ENCODE measurements at regions of chr6 and their contacts with region 1.

Region 1: GRCh38 chr6:2103644-2104523 is 141.5 kb downstream of the GMDS start:
- DNase-seq: no peak
- ATAC-seq: peak; percentile 84 to 95 (median 92)
- H3K4me3 ChIP-seq: no peak overlapping the region
- H3K27ac ChIP-seq: peak overlapping the region in 1 of 4 donors; percentile 35
- H3K4me1 ChIP-seq: peaks cover 8 to 15% (median 12%) of the 10 kb centered on the region in 3 donors
- H3K27me3 ChIP-seq: no peaks in the 10 kb centered on the region
- CTCF ChIP-seq: peak in 3 of 4 donors; percentile 6 to 42 (median 23)

Region 2: DNA sequence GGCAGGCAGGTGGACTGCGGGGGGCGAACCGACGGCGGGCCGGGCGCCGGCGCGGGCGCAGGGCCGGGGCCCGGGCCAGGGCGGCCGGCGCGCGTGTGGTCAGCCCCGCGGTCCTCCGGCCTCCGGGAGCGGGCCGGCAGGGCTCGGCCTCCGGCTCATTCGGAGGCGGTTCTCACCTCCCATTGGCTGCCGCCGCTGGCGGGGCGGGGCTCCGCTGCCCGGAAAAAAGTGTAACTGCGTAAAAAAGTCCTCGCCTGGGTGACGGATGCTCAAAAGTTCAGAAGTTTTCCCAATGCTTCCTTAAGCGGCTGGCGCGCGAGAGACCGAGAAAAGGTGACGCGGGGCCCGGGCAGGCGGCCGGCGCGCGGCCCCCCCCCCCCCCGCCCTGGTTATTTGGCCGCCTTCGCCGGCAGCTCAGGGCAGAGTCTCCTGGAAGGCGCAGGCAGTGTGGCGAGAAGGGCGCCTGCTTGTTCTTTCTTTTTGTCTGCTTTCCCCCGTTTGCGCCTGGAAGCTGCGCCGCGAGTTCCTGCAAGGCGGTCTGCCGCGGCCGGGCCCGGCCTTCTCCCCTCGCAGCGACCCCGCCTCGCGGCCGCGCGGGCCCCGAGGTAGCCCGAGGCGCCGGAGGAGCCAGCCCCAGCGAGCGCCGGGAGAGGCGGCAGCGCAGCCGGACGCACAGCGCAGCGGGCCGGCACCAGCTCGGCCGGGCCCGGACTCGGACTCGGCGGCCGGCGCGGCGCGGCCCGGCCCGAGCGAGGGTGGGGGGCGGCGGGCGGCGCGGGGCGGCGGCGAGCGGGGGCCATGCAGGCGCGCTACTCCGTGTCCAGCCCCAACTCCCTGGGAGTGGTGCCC is 494.0 kb before region 1 on chr6 and contains the start of gene FOXC1:
- intact Hi-C with region 1: loop called in 2 of 3 experiments (anchors 10 kb)
- DNase-seq: peak; percentile 85 to 94 (median 92)
- ATAC-seq: peak; percentile 82 to 88 (median 86)
- H3K4me3 ChIP-seq: peak within 1 kb of the TSS; percentile 49 to 67 (median 60)
- H3K27ac ChIP-seq: peak within 1 kb of the TSS; percentile 78 to 91 (median 82)
- H3K4me1 ChIP-seq: peaks cover 0 to 12% (median 10%) of the 10 kb centered on the region in 3 donors
- H3K27me3 ChIP-seq: peaks cover 8 to 42% (median 10%) of the 10 kb centered on the region in 4 donors
- CTCF ChIP-seq: no peak
- total RNA-seq, gene FOXC1: 2.4 to 4.0 (median 2.6) TPM

Region 3: GRCh38 chr6:2008383-2008976 is 95.4 kb before region 1 on chr6:
- intact Hi-C with region 1: no loop called
- DNase-seq: no peak
- ATAC-seq: no peak
- H3K4me3 ChIP-seq: no peak overlapping the region
- H3K27ac ChIP-seq: no peak overlapping the region
- H3K4me1 ChIP-seq: no peaks in the 10 kb centered on the region
- H3K27me3 ChIP-seq: no peaks in the 10 kb centered on the region
- CTCF ChIP-seq: no peak

Measured in pancreas (tissue), 10 donors.